OCI-LY7 (cell line): ENCODE measurements at regions of chr18 and their contacts with region 1.

Region 1: GRCh38 chr18:32549248-32550110 is 78.8 kb upstream of the GAREM1 start:
- DNase-seq: peak; percentile 48
- H3K4me3 ChIP-seq: no peak overlapping the region
- H3K27ac ChIP-seq: no peak overlapping the region
- H3K4me1 ChIP-seq: no peaks in the 10 kb centered on the region
- CTCF ChIP-seq: peak; percentile 72

Region 2: DNA sequence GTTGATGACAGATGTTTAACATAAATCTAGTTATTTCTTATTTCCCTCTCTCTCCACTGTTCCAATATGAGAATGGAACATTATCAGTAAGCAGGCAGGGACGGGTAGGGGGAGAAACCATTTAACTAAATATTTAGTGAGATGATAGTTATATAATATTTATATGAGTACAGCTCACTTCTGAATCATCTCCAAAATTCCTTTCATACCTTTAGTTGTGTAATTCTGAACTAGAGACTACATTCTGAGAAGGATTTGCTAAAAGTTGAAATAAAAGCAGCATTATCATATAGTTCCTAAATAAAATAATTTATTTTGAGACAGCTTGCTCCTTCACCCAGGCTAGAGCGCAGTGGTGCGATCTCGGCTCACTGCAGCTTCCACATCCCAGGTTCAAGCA is 906.5 kb before region 1 on chr18:
- CTCF ChIA-PET with region 1: no interaction called
- POLR2A ChIA-PET with region 1: no interaction called
- intact Hi-C with region 1: loop called (anchors 5 kb)
- DNase-seq: no peak
- H3K4me3 ChIP-seq: no peak overlapping the region
- H3K27ac ChIP-seq: no peak overlapping the region
- H3K4me1 ChIP-seq: peaks cover 13% of the 10 kb centered on the region
- CTCF ChIP-seq: no peak

Region 3: GRCh38 chr18:32158108-32158624 is 391.3 kb before region 1 on chr18:
- CTCF ChIA-PET with region 1: no interaction called
- POLR2A ChIA-PET with region 1: no interaction called
- intact Hi-C with region 1: loop called (anchors 1 kb)
- DNase-seq: peak; percentile 67
- H3K4me3 ChIP-seq: no peak overlapping the region
- H3K27ac ChIP-seq: no peak overlapping the region
- H3K4me1 ChIP-seq: no peaks in the 10 kb centered on the region
- CTCF ChIP-seq: peak; percentile 78

Region 4: GRCh38 chr18:32271672-32272208 is 277.7 kb before region 1 on chr18:
- CTCF ChIA-PET with region 1: no interaction called
- POLR2A ChIA-PET with region 1: no interaction called
- intact Hi-C with region 1: loop called (anchors 2 kb)
- DNase-seq: peak; percentile 14
- H3K4me3 ChIP-seq: no peak overlapping the region
- H3K27ac ChIP-seq: no peak overlapping the region
- H3K4me1 ChIP-seq: no peaks in the 10 kb centered on the region
- CTCF ChIP-seq: peak; percentile 75